Activated CD4-positive, alpha-beta T cell treated with anti-CD3 and anti-CD28 coated beads for 36 hours (primary cell): ENCODE measurements at regions of chr16 and their contacts with region 1.

Region 1: DNA sequence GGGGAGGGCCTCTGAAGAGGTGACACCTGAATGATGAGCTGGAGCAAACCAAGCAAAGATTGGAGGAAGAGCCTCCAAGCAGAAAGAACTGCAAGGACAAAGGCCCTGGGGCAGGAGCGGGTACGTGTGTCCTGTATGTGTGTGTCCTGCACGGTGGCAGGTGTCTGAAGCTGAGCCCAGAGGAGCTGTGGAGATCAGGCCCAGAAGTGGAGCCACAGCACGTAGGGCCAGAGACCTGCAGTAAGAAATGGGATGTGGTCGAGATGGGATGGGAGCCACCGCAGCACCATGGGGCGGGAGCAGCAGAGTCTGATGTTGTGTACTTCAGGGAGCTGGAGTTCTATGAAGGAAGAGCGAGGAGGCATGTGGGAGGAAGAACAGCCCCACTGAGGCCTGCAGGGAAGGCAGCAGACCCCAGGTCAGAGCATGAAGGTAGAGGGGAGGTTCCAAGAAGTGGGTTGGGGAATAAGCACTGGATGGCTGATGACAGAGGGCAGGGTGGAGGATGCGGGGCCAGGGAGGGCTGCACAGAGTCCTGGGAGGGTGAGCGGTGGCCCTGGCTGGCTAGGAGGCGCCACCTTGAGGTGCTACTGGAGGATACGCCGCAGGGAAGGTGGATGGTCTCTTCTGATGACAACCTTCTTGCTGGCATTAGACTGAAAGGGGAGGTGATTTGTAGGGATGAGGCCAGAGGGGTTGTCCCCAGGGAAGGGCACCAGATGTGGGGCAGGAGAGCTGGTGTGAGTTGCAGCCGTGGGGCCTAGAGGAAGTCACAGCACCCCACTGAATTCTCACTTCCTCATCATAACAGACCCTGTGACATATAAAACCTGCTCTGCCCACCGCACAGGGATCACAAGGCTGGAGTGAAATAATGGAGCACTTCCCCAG is 10.6 kb upstream of the CETP start:
- DNase-seq: peak; percentile 85
- ATAC-seq: peak; percentile 94
- H3K4me3 Mint-ChIP-seq: no peak overlapping the region
- H3K27ac Mint-ChIP-seq: no peak overlapping the region
- H3K4me1 Mint-ChIP-seq: peaks cover 18% of the 10 kb centered on the region
- H3K27me3 Mint-ChIP-seq: no peaks in the 10 kb centered on the region

Region 2: GRCh38 chr16:56938422-56939156 is 12.5 kb before region 1 on chr16:
- CTCF ChIA-PET with region 1: interaction called, 11 read pairs
- POLR2A ChIA-PET with region 1: no interaction called
- intact Hi-C with region 1: no loop called
- DNase-seq: peak; percentile 78
- ATAC-seq: peak; percentile 81
- H3K4me3 Mint-ChIP-seq: peak overlapping the region; percentile 70
- H3K27ac Mint-ChIP-seq: peak overlapping the region; percentile 95
- H3K4me1 Mint-ChIP-seq: peaks cover 90% of the 10 kb centered on the region
- H3K27me3 Mint-ChIP-seq: no peaks in the 10 kb centered on the region